PC-3 (cell line): ENCODE measurements at regions of chr2 and their contacts with region 1.

Region 1: DNA sequence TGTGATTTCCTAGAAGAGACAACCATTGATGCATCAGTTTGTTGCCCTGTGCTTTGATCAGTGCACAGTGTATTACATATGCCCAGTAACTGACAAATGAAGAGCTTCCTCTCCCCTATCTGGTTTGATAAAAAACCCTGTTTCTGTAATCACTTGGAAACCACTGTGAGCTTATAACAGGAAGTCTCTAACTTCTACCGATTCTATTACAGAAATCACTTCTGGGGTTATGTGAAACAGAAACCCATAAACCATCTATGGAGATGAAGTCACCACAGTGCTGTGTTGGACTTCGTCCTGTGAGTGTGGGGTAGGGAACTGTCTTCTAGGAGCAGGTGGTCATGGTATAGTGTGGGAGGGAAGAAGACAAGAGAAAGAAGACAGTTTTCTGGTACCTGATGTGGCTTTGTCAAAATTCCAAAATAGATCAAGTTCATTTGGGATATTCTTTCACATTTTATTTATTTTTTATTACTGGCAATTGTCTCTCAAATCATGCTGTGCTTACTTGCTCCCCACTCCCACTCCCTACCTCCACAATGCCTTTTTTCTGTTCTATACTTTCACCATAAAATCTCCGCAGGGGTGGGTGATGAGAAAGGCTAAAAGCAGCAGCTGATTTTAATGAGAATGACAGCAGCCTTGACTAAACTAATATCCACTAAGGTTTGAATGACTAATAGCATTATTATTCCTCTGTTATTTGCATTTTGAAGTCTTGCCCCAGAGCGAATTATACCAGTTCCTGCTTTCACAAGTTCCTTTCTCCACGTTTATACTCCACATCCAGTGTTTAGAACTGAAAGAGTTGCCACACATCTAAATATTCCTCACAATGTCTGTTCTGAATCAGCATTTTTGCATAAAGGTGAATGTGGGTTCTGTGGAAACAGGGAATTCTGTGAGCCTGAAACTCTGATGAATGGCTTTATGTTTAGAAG is 41.7 kb upstream of the RND3 start:
- DNase-seq: peak; percentile 92
- ATAC-seq: peak; percentile 75
- H3K4me3 ChIP-seq: peak overlapping the region; percentile 34
- H3K27ac ChIP-seq: peak overlapping the region; percentile 91
- H3K4me1 ChIP-seq: peaks cover 69% of the 10 kb centered on the region
- H3K27me3 ChIP-seq: no peaks in the 10 kb centered on the region
- CTCF ChIP-seq: no peak

Region 2: GRCh38 chr2:150495993-150496627 is 33.0 kb before region 1 on chr2:
- CTCF ChIA-PET with region 1: no interaction called
- POLR2A ChIA-PET with region 1: no interaction called
- intact Hi-C with region 1: loop called (anchors 1 kb)
- DNase-seq: peak; percentile 96
- ATAC-seq: peak; percentile 87
- H3K4me3 ChIP-seq: peak overlapping the region; percentile 14; the same call in 1 of the 2 replicates
- H3K27ac ChIP-seq: peak overlapping the region; percentile 81
- H3K4me1 ChIP-seq: peaks cover 38% of the 10 kb centered on the region
- H3K27me3 ChIP-seq: no peaks in the 10 kb centered on the region
- CTCF ChIP-seq: no peak

Region 3: DNA sequence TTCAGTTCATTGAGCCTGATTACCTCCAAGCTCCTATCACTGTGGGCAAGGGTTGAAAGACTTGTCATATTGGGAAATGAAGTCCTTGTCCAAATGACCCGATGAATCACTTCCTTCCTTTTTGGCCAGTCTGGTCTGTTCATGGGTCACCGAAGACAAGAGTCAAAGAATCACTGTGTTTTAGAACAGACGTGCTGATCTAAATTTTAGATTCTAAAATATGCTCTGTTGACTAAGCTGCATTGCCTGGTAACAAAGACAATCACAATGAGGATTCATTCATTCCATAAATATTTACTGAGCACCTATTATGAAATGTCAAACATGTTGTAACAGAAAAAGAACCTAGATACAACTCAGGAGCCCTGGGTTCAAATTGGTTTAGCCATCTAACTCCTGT is 57.7 kb after region 1 on chr2:
- CTCF ChIA-PET with region 1: no interaction called
- POLR2A ChIA-PET with region 1: no interaction called
- intact Hi-C with region 1: loop called (anchors 5 kb)
- DNase-seq: peak; percentile 92
- ATAC-seq: peak; percentile 81
- H3K4me3 ChIP-seq: no peak overlapping the region
- H3K27ac ChIP-seq: peak overlapping the region; percentile 45; the same call in 1 of the 2 replicates
- H3K4me1 ChIP-seq: peaks cover 28% of the 10 kb centered on the region
- H3K27me3 ChIP-seq: no peaks in the 10 kb centered on the region
- CTCF ChIP-seq: no peak

Region 4: GRCh38 chr2:150624001-150624401 is 94.9 kb after region 1 on chr2:
- CTCF ChIA-PET with region 1: no interaction called
- POLR2A ChIA-PET with region 1: no interaction called
- intact Hi-C with region 1: no loop called
- DNase-seq: peak; percentile 50
- ATAC-seq: no peak
- H3K4me3 ChIP-seq: no peak overlapping the region
- H3K27ac ChIP-seq: peak overlapping the region; percentile 11; the same call in 1 of the 2 replicates
- H3K4me1 ChIP-seq: peaks cover 48% of the 10 kb centered on the region
- H3K27me3 ChIP-seq: no peaks in the 10 kb centered on the region
- CTCF ChIP-seq: no peak

Region 5: DNA sequence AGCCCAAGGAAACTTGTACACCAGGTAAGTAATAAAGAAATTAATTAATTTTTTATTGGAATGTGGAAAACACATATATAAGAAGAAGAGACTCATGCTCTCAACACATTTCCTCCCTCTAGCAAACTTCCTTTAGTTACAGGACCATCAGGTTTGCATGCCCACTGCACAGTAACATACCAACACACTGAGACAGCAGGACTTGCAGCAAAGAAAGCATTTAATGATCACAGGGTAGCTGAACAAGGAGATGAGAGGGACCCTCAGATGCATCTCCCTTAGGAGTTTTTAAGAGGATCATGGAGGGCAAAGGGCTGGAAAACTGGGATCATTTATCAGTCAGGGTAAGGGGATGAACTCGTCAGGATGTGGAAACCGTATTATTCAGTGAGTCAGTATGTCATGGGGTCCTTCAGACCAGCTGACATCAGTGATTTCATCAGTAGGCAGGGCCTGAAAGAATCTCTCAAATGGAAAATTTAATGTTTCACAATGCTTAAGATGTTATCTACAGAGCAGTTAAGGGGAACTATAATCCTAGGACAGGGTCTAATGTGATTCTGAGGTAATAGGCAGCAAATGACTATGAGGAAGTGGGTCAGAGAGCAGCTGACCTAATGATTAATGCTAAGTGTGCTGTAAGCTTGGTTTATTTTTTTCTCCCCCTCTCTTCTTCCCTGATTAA is 152.1 kb after region 1 on chr2:
- CTCF ChIA-PET with region 1: no interaction called
- POLR2A ChIA-PET with region 1: no interaction called
- intact Hi-C with region 1: loop called (anchors 2 kb)
- DNase-seq: peak; percentile 86
- ATAC-seq: peak; percentile 79
- H3K4me3 ChIP-seq: no peak overlapping the region
- H3K27ac ChIP-seq: peak overlapping the region; percentile 93
- H3K4me1 ChIP-seq: peaks cover 45% of the 10 kb centered on the region
- H3K27me3 ChIP-seq: no peaks in the 10 kb centered on the region
- CTCF ChIP-seq: no peak

Region 6: DNA sequence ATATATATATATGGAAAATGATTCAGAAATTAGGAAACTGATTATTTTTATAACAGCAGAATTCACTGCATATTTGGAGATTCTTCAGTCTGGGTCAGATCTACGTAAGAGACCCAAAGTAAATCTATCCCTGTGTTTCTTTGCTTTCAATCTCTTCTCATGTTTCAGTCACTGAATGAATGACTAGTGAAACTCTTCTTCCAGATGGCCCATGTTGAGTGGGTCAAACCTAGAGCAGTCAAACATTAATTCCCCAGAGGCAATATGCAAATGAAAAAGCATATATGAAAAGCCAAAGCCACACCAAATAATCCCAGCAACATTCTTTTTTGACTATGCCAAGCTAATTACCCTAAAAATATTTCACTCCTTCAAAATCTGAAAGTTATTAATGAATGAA is 415.2 kb after region 1 on chr2:
- CTCF ChIA-PET with region 1: no interaction called
- POLR2A ChIA-PET with region 1: no interaction called
- intact Hi-C with region 1: loop called (anchors 10 kb)
- DNase-seq: no peak
- ATAC-seq: no peak
- H3K4me3 ChIP-seq: no peak overlapping the region
- H3K27ac ChIP-seq: no peak overlapping the region
- H3K4me1 ChIP-seq: no peaks in the 10 kb centered on the region
- H3K27me3 ChIP-seq: no peaks in the 10 kb centered on the region
- CTCF ChIP-seq: no peak